Ovary (tissue), 10 donors: ENCODE measurements at regions of chr15 and their contacts with region 1.

Region 1: GRCh38 chr15:39767921-39768320 is 14.7 kb downstream of the FSIP1 start:
- DNase-seq: no peak
- H3K4me3 ChIP-seq: no peak overlapping the region
- H3K27ac ChIP-seq: no peak overlapping the region
- H3K4me1 ChIP-seq: peaks cover 5% of the 10 kb centered on the region
- H3K27me3 ChIP-seq: no peaks in the 10 kb centered on the region
- CTCF ChIP-seq: no peak
- EP300 ChIP-seq: no peak
- POLR2A ChIP-seq: no peak

Region 2: GRCh38 chr15:39669661-39670060 is 98.3 kb before region 1 on chr15:
- intact Hi-C with region 1: no loop called
- DNase-seq: no peak
- H3K4me3 ChIP-seq: no peak overlapping the region
- H3K27ac ChIP-seq: no peak overlapping the region
- H3K4me1 ChIP-seq: peaks cover 1% of the 10 kb centered on the region
- H3K27me3 ChIP-seq: no peaks in the 10 kb centered on the region
- CTCF ChIP-seq: no peak
- EP300 ChIP-seq: no peak
- POLR2A ChIP-seq: no peak

Region 3: DNA sequence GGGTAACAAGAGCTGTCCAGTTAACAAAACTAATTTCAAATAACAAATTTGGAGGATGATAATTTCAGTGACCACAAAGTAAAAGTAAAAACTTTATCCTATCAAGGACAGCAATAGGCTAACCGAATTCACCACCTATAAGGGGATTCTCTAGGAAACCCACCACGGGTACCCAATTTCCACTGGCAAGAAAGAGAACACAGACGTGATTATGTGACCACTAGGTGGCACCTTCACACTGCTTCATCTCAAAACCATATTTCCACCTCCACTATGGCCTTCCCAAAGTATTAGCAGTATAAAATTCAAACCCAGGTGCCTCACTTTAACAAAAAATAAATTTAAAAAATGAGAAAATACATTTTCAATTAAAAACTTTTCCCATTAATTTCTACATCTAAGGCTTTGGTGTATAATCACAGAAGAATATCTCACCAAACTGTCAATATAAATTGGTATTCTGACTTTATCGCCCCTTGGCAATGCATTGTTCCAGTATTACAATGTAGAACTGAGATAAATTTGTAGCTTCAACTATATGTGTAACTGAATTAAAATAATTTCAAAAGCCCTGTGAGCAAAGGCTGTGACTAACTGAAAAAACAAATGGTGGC is 81.8 kb before region 1 on chr15:
- intact Hi-C with region 1: loop called in 1 of 4 experiments (anchors 10 kb)
- DNase-seq: peak in 1 of 5 donors; percentile 27
- H3K4me3 ChIP-seq: no peak overlapping the region
- H3K27ac ChIP-seq: no peak overlapping the region
- H3K4me1 ChIP-seq: no peaks in the 10 kb centered on the region
- H3K27me3 ChIP-seq: no peaks in the 10 kb centered on the region
- CTCF ChIP-seq: peak in 1 of 3 donors; percentile 57
- EP300 ChIP-seq: no peak
- POLR2A ChIP-seq: no peak

Region 4: DNA sequence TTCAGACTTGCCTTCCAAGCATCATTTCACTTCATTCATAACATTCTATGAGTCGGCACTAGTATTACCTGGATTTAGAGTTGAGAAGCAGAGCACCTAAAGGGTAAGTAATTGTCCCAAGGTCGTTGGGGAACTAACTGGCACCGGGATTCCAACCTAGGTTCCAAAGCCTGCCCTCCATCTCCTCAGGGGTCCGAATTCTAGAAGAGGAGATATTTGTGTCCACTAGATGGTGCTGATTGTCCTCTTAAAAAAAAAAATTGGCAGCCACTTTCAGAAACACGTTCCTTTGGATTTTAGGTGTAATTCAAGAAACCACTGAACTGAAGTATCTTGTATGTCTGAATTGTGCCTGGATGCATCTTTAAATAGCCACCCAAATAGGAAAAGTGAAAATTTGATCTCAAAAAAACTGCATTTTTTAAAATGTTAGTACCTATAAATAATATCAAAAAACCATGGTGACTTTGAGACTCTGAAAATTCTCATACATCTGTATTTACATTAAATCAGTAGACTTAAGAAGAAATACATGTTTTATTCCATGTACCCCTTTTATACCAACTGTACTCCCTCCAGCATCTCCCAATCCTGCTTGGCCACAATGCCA is 18.6 kb after region 1 on chr15:
- intact Hi-C with region 1: no loop called
- DNase-seq: no peak
- H3K4me3 ChIP-seq: no peak overlapping the region
- H3K27ac ChIP-seq: no peak overlapping the region
- H3K4me1 ChIP-seq: peaks cover 1% of the 10 kb centered on the region
- H3K27me3 ChIP-seq: no peaks in the 10 kb centered on the region
- CTCF ChIP-seq: peak; percentile 29 to 34 (median 31)
- EP300 ChIP-seq: no peak
- POLR2A ChIP-seq: no peak